ENCODE measurements at regions of chr10 and their contacts with region 1.

Region 1: DNA sequence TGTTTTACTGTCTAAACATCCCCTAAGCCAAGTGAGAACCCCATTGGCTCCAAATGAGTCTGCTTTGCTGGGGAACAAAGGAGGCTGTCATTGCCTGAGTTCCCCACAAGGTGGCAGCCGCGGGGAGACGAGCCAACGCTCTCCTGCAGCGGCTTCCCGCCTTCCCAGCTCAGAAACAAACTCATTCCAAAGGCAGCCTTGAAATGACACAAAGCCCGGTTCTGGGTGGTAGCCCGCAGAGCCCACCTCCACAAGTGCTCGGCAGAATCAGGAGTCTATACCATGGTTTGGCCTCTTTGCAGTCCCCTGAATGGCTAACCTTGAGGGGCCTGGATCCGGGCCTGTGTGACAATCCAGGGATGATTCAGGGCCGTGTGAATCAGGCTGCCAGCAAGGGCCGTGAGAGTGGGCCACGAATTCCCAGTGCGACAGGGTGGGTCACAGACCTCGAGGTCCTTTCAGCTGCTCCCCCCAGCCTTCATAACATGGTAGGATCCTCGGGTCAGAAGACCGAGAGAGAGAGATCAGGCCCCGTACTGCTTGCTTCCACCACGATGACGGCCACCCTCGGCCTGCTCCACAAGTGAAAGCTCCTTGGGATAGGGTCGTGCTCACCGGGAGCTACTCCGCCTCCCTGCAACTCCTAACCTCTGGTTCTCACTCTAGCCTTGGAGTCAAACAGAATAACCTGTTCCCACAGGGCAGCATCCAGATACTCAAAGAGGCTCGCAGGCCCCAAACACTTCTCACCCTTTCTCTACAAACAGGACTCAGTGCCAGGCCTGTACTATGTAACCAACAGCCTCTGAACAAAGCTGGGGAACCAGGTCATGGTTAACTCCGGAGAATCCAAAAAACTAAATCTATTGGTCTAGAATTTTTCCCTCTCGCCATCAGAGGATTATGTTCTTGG is 79.6 kb downstream of the DLG5 start:
- DNase-seq: peak; percentile 60 to 70
- ATAC-seq: peak; percentile 81 to 83
- H3K4me3 ChIP-seq: no peak overlapping the region
- H3K27ac ChIP-seq: peak overlapping the region; percentile 59 to 71 (median 70)
- H3K4me1 ChIP-seq: peaks cover 8 to 22% of the 10 kb centered on the region in 2 donors
- H3K27me3 ChIP-seq: no peaks in the 10 kb centered on the region
- CTCF ChIP-seq: peak; percentile 91 to 97 (median 95)
- POLR2A ChIP-seq: no peak

Region 2: DNA sequence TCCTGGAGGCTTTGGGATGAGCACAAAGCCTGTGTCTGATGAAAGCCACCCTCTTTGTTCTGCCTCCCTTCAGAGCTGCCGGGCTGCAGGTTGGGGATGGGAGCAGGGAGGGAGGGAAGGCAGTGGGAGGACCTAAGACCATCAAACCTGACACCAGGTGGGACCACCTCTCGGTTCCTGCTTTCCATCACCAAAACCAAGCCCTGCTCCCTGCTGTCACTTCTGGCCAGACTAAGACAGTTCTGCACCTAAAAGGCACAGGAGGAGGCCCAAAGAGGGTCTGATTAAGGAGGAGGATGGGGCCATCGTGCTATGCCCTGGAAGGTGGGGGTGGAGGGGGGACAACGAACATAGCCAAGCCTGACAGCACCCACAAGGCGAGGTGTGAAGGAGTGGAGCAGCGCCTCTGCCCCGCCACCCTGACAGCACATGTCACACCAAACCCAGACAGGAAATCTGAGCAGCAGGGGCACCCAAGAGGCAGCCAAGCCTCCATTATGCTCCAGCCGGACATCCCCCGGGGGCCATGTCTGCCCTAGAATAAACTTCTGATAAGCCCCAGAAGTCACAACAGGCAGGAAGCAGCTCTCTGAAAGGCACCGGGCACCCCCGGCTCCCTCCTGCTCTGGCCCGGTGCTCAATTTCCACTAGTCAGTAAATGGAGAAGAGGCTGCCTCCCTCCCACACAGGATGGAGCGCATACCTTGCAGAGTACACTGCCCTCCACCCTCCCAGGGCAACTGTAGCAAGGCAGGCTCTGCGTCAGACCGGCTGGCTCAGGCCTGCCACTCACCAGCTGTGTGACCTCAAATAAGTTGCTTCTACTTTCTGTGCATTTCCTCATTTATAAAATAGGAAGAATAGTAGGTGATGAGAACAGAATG is 30.7 kb after region 1 on chr10:
- in situ Hi-C with region 1: no loop called
- intact Hi-C with region 1: loop called (anchors 2 kb)
- DNase-seq: peak in 1 of 2 donors; percentile 78
- ATAC-seq: peak; percentile 18 to 46
- H3K4me3 ChIP-seq: peak overlapping the region in 2 of 4 donors; percentile 11 to 34
- H3K27ac ChIP-seq: peak overlapping the region; percentile 82 to 96 (median 90)
- H3K4me1 ChIP-seq: peaks cover 66 to 84% of the 10 kb centered on the region in 2 donors
- H3K27me3 ChIP-seq: no peaks in the 10 kb centered on the region
- CTCF ChIP-seq: no peak
- POLR2A ChIP-seq: peak; percentile 33 to 37

Region 3: DNA sequence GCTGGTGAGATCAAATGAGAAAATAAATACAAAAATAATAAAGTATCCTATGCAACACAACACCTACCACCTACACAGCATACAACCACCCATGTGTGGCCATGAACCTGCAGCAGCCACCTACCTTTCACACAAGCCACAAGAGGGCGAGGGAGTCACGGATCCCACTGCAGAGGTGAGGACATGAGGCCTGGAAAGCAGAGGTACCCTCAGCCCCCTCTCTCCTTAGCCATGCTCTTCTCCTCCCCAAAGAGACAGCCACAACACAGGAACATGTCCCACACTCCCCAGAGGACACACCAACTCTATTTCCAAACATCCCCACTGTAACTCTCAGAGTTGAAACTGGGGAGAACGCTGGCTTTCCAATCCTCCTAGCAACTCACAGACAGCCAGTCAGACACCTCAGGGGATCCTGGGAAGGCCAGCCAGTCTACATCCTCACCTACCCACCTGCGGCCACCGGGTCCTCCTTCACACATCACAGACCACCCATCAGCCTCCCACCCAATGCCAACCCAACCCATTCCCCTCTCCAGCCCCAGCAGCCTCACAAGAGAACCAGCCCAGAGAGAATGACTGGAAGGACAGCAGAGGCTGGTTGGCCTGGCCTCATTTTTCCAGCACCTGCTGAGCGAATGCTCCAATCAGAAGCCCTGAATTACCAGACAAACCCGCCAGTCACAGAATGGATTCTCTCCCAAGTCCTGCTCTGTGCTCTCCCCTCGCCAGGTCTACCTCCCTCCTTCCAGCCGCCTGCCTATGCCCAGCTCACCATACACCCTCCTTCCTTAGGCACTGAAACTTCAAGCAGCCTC is 61.1 kb after region 1 on chr10:
- in situ Hi-C with region 1: no loop called
- intact Hi-C with region 1: loop called (anchors 5 kb)
- DNase-seq: peak in 1 of 2 donors; percentile 39
- ATAC-seq: peak; percentile 36 to 42
- H3K4me3 ChIP-seq: no peak overlapping the region
- H3K27ac ChIP-seq: peak overlapping the region in 2 of 4 donors; percentile 11 to 15
- H3K4me1 ChIP-seq: peaks cover 58 to 59% of the 10 kb centered on the region in 2 donors
- H3K27me3 ChIP-seq: no peaks in the 10 kb centered on the region
- CTCF ChIP-seq: peak in 3 of 5 experiments; percentile 28 to 41 (median 29)
- POLR2A ChIP-seq: no peak

Region 4: GRCh38 chr10:77926566-77927401 is 79.8 kb after region 1 on chr10 and contains the start of gene DLG5:
- in situ Hi-C with region 1: loop called in 1 of 4 experiments (anchors 10 kb)
- intact Hi-C with region 1: loop called (anchors 2 kb)
- DNase-seq: peak; percentile 43 to 59
- ATAC-seq: peak; percentile 71 to 75
- H3K4me3 ChIP-seq: peak within 1 kb of the TSS; percentile 63 to 92 (median 78)
- H3K27ac ChIP-seq: peak within 1 kb of the TSS; percentile 79 to 91 (median 84)
- H3K4me1 ChIP-seq: peaks cover 22 to 23% of the 10 kb centered on the region in 2 donors
- H3K27me3 ChIP-seq: no peaks in the 10 kb centered on the region
- CTCF ChIP-seq: peak in 3 of 5 experiments; percentile 23 to 29 (median 25)
- POLR2A ChIP-seq: peak; percentile 53 to 64
- total RNA-seq, gene DLG5: 28.6 to 51.2 (median 40.3) TPM

Region 5: DNA sequence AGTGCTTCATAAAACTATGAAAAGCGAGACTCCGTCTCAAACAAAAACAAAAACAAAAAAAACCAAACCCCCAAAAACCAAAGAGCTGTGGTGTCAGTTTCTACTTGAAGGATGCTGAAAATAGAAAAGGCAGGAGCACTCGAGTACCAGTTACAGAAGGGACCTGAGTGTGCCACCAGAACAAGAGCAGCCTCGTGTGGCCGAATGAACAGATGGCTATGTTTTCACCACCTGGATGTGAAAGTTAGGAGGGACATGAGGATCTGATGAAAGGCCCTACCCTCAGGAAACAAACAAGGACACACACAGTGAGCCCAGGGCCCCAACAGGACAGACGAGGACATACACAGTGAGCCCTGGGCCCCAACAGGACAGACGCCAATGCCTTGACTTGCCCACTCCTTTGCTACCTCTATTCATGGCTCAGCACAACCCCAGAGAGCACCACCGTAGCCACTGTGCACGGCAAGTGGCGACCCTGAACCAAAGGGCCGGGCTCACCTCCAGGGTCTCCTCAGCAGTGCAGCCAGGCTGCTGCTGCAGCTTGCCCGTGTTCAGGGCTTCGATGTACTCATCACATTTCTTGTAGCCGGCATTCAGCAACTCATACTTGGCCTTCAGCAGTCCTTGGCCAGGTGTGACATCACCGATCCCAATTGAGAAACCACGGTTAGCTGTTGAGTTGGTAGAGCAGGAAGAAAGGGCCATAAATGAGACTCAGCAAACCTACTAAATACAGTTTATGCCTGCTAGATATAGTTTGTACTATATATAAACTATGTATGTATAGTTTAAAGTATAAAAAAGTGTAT is 157.4 kb after region 1 on chr10:
- in situ Hi-C with region 1: loop called (anchors 5 to 10 kb)
- intact Hi-C with region 1: loop called (anchors 1 kb)
- DNase-seq: peak; percentile 46 to 74
- ATAC-seq: peak; percentile 64 to 68
- H3K4me3 ChIP-seq: no peak overlapping the region
- H3K27ac ChIP-seq: peak overlapping the region; percentile 77 to 89 (median 87)
- H3K4me1 ChIP-seq: peaks cover 6 to 55% of the 10 kb centered on the region in 2 donors
- H3K27me3 ChIP-seq: no peaks in the 10 kb centered on the region
- CTCF ChIP-seq: peak in 4 of 5 experiments; percentile 20 to 60 (median 52)
- POLR2A ChIP-seq: no peak

Region 6: DNA sequence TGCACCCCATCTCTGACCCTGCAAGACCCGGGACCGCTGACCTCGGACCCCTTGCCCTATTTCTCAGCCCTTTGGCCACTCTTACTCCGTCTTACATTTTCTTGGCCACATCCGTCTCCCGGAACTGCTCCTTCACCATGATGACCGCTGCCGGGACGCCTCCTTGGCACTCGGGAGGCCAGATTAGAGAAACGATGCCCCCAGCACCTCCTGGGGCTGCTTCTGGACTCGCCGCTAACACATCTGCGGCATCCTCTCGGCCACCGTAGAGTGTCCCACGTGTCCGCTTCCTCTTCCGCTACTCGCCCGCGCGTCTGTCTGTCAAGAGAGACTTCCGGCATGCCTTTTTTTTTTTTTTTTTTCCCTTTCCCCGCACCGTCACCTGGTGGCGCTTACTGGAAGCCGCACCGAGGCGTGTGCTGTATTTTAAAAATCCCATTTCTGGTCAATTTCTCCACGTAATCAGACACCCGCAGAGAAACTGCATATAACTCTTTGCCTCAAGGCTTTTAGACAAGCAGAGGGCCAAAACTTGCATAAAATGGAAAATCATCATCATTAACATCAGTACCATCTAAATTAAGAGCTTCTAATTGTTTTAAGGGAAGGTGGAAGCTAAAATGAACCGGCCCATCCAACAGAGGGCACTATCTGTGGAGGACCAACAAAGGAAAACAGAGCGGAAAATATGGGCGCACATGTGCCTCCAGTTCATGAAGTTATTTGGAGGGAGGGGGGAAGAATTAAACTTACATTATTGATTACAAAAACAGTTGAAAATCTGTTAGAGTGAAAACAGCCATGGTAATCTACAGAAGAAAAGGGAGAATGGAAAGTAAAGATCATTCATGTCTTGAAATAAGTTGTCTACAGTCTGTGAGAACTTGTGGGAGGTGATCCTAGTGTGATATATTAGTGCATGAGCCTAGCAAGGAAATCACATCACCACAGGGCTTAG is 182.6 kb after region 1 on chr10 and contains the start of gene POLR3A:
- in situ Hi-C with region 1: no loop called
- intact Hi-C with region 1: loop called (anchors 2 kb)
- DNase-seq: peak; percentile 94 to 97
- ATAC-seq: peak; percentile 73 to 75
- H3K4me3 ChIP-seq: peak within 1 kb of the TSS; percentile 95 to 99 (median 97)
- H3K27ac ChIP-seq: peak within 1 kb of the TSS; percentile 79 to 87 (median 84)
- H3K4me1 ChIP-seq: peaks cover 23 to 28% of the 10 kb centered on the region in 2 donors
- H3K27me3 ChIP-seq: no peaks in the 10 kb centered on the region
- CTCF ChIP-seq: peak; percentile 69 to 86 (median 73)
- POLR2A ChIP-seq: peak; percentile 46 to 62
- total RNA-seq, gene POLR3A: 11.0 to 17.4 (median 15.5) TPM